Left colon (tissue), 2 donors: ENCODE measurements at regions of chr18 and their contacts with region 1.

Region 1: DNA sequence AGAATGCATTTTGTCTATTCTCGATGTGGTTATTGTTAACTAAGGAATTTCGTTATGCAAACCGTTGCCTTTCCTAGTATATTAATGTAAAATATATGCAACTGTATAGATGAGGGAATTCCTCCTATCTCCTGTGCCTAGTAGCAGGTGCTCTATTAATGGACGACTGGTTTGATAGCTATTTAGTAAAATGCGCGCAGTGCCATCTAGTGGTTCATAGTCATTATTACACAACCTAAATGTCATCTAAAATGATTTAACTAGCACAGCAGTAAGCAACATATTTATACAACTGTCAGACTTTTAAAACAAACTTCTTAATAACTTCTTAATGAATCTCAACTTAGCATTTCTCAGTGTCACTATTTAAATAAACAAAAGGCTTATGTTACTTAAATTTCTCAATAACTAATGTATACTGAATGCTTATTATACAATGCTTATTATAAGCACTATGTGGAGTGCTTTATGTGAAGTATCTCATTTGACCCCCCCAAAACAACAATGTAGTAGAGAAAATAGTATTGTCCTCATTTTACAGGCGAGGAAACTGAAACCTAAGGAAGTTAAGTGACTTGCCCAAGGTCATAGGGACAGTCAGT is 77.9 kb downstream of the DTNA start:
- DNase-seq: peak in 1 of 2 donors; percentile 16
- ATAC-seq: peak; percentile 67

Region 2: DNA sequence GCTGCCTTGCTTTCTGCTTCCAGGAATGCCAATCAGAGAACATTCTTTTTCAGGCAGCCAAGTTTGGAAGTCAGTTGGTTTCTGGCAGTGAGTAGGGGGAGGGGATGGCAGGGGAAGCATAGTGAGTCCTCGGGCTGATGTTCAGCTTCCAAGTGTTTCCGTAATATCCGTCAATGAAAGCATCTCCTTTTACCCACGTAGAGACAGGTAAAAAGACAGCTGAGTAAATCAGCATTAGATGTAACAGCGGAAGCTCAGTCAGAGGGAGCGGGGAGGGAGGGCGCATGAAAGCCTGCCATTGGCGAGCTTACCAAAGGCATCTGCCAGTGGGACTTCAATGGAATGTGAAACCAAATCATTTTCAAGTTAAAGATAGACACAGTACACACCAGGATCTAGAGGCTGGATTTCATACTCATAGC is 195.1 kb before region 1 on chr18:
- intact Hi-C with region 1: loop called in 1 of 2 experiments (anchors 10 kb)
- DNase-seq: peak in 1 of 2 donors; percentile 9
- ATAC-seq: no peak

Region 3: GRCh38 chr18:34661464-34662111 is 126.4 kb before region 1 on chr18:
- intact Hi-C with region 1: loop called in 1 of 2 experiments (anchors 5 kb)
- DNase-seq: no peak
- ATAC-seq: peak; percentile 67